ENCODE measurements at regions of chr4 and their contacts with region 1.

Region 1: DNA sequence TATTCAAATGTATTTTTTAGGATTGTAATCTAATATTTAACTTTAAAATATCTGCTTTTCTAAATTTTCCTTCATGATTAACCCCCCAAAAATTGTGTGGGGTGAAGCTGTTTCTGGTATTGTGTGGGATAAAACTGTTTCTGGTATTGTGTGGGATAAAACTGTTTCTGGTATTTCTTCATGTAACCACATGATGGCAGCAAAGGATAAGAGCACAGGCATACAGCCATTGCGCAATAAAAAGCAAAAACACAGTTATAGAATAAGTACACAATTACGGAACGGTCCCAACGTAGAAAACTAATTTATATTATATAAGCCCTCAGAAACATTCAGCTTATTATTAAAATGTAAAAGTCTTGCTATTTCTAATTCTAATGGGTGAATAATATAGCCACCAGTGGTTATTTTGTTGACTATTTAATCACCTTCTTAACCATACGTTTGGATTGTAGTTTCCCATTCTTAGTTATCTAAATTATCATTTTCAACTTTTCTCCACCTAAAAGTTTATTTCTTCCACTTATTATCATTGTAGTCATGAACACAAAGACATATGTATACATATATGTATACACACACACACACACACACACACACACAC is 333.9 kb upstream of the FSTL5 start:
- DNase-seq: peak; percentile 15
- ATAC-seq: peak; percentile 63
- H3K4me3 ChIP-seq: no peak overlapping the region
- H3K27ac ChIP-seq: no peak overlapping the region
- H3K4me1 ChIP-seq: no peaks in the 10 kb centered on the region
- H3K27me3 ChIP-seq: no peaks in the 10 kb centered on the region
- CTCF ChIP-seq: peak; percentile 66 to 82 (median 78)
- POLR2A ChIP-seq: no peak
- RAD21 ChIP-seq: peak; percentile 92

Region 2: GRCh38 chr4:162959046-162959445 is 461.4 kb after region 1 on chr4:
- CTCF ChIA-PET with region 1: interaction called, 4 read pairs
- POLR2A ChIA-PET with region 1: no interaction called
- RAD21 ChIA-PET with region 1: no interaction called
- intact Hi-C with region 1: loop called (anchors 1 kb)
- DNase-seq: peak; percentile 10
- ATAC-seq: peak; percentile 83
- H3K4me3 ChIP-seq: no peak overlapping the region
- H3K27ac ChIP-seq: no peak overlapping the region
- H3K4me1 ChIP-seq: no peaks in the 10 kb centered on the region
- H3K27me3 ChIP-seq: no peaks in the 10 kb centered on the region
- CTCF ChIP-seq: peak; percentile 20 to 49 (median 36); a peak in 5 of 6 replicates
- POLR2A ChIP-seq: no peak
- RAD21 ChIP-seq: peak; percentile 51

Region 3: GRCh38 chr4:163042306-163042705 is 544.6 kb after region 1 on chr4:
- CTCF ChIA-PET with region 1: interaction called, 21 read pairs
- POLR2A ChIA-PET with region 1: no interaction called
- RAD21 ChIA-PET with region 1: interaction called in 1 of 2 experiments, 4 read pairs
- intact Hi-C with region 1: loop called (anchors 1 kb)
- DNase-seq: no peak
- ATAC-seq: no peak
- H3K4me3 ChIP-seq: no peak overlapping the region
- H3K27ac ChIP-seq: no peak overlapping the region
- H3K4me1 ChIP-seq: no peaks in the 10 kb centered on the region
- H3K27me3 ChIP-seq: no peaks in the 10 kb centered on the region
- CTCF ChIP-seq: no peak
- POLR2A ChIP-seq: no peak
- RAD21 ChIP-seq: no peak

Region 4: DNA sequence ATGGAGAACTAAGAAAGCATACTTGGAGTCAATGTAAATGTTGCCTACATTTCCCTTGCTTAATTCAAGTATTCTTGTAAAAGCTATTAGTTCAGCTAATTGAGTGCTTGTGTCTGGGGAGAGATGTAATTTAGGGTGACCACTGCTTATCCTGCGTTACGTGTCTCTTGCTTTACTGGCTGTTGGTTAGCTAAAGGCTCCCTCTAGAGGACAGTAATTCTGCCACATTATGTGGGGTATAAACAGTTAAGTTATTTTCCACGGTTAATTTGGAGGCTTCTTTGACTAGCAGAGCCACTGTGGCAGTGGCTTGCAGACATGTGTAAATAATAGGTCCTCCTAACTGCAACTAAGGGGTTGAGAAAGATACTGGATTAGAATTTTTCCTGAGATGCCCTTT is 694.3 kb after region 1 on chr4:
- CTCF ChIA-PET with region 1: no interaction called
- POLR2A ChIA-PET with region 1: no interaction called
- RAD21 ChIA-PET with region 1: interaction called in 1 of 2 experiments, 3 read pairs
- intact Hi-C with region 1: loop called (anchors 1 kb)
- DNase-seq: peak; percentile 31
- ATAC-seq: peak; percentile 93
- H3K4me3 ChIP-seq: no peak overlapping the region
- H3K27ac ChIP-seq: no peak overlapping the region
- H3K4me1 ChIP-seq: no peaks in the 10 kb centered on the region
- H3K27me3 ChIP-seq: no peaks in the 10 kb centered on the region
- CTCF ChIP-seq: peak; percentile 60 to 82 (median 63); a peak in 5 of 6 replicates
- POLR2A ChIP-seq: no peak
- RAD21 ChIP-seq: peak; percentile 81

Region 5: DNA sequence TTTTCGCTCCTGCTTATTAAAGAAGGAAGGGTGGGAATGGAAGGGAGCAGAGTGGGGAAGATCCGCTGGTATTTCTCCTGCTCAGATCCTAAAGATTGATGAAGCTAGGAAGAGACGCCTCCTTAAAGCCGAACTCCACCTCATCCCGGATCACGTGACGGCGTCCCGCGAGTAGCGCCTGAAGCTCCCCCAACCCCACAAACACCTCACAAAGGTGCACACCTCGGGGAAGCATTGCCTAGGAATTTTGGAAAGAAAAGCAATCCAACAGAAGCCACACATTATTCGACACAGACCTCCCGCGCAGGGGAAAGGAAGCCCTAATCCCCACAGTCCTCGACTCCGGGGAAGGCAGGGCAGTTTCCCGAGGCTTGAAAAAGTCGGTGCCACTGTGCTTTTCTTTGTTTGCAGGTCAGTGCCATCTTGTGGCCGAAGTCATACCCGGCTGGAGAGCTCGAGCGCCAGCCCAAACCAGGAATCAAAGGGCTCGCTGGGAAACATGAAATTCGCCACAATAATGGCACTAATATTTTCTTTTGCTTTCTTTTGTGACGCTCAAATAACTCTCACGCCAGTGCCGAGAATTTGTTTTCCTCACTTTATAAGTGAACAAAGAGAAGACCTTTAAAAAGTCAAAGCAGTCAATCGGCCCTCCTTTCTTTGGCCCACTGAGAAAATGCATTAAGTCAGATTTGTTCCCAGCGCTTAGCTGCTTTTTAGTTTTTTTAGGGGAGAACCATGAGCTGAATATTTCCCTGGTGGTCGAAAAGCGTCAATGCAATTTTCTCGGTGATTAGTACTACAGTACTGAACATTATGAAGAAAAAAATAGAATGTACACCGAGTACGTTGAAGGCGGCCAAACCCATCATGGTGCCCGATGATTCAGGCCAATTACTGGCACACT is 835.1 kb after region 1 on chr4 and contains the start of gene NPY1R:
- CTCF ChIA-PET with region 1: no interaction called
- POLR2A ChIA-PET with region 1: no interaction called
- RAD21 ChIA-PET with region 1: no interaction called
- intact Hi-C with region 1: loop called (anchors 5 kb)
- DNase-seq: peak; percentile 34
- ATAC-seq: peak; percentile 90
- H3K4me3 ChIP-seq: peak within 1 kb of the TSS; percentile 17 to 37; a peak in 3 of 4 replicates
- H3K27ac ChIP-seq: no peak within 1 kb of the TSS
- H3K4me1 ChIP-seq: no peaks in the 10 kb centered on the region; a peak in 1 of 4 replicates
- H3K27me3 ChIP-seq: no peaks in the 10 kb centered on the region
- CTCF ChIP-seq: peak; percentile 34 to 62 (median 61); a peak in 5 of 6 replicates
- POLR2A ChIP-seq: no peak
- RAD21 ChIP-seq: peak; percentile 62
- total RNA-seq, gene NPY1R: 0.39 TPM

Region 6: DNA sequence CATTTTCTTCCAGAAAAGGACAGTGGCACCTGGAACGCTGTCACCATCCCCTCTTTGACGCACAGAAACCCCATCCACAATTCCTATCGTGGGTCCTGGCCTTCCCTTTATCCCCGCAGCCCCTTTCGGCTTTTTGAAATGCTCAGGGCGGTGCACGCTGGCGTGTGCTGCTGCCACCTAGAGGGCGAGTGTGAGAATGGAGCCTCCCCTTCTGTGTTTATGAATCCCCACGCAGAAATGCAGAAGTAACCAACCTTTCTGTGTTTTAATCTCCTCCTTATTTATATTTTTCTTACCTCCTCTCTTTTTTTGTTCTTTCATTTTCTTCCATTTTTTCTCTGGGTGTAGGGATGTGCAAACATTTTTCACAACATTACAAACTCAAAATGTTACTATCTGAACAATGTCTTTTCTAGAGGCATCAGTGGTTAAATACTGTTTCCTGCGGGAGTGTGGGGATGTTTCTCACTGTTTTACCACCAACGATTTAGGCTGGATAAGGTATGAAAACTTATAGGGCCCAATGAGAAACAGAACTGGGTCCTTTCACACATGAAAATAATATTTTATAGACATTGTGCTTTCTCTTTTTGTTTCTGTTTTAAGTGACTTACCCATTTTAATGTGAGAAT is 1046.9 kb after region 1 on chr4:
- CTCF ChIA-PET with region 1: interaction called, 5 read pairs
- POLR2A ChIA-PET with region 1: no interaction called
- RAD21 ChIA-PET with region 1: no interaction called
- intact Hi-C with region 1: loop called (anchors 2 kb)
- DNase-seq: no peak
- ATAC-seq: peak; percentile 85
- H3K4me3 ChIP-seq: no peak overlapping the region
- H3K27ac ChIP-seq: no peak overlapping the region
- H3K4me1 ChIP-seq: peaks cover 0 to 7% of the 10 kb centered on the region in 2 experiments; a peak in 1 of 4 replicates
- H3K27me3 ChIP-seq: no peaks in the 10 kb centered on the region
- CTCF ChIP-seq: peak; percentile 59 to 94 (median 94); a peak in 5 of 6 replicates
- POLR2A ChIP-seq: no peak
- RAD21 ChIP-seq: peak; percentile 64

Region 7: GRCh38 chr4:164012396-164013027 is 1514.8 kb after region 1 on chr4:
- CTCF ChIA-PET with region 1: no interaction called
- POLR2A ChIA-PET with region 1: no interaction called
- RAD21 ChIA-PET with region 1: no interaction called
- intact Hi-C with region 1: loop called (anchors 2 kb)
- DNase-seq: peak; percentile 29
- ATAC-seq: peak; percentile 99
- H3K4me3 ChIP-seq: no peak overlapping the region
- H3K27ac ChIP-seq: no peak overlapping the region
- H3K4me1 ChIP-seq: no peaks in the 10 kb centered on the region
- H3K27me3 ChIP-seq: no peaks in the 10 kb centered on the region
- CTCF ChIP-seq: peak; percentile 69 to 82 (median 72)
- POLR2A ChIP-seq: no peak
- RAD21 ChIP-seq: peak; percentile 89

Measured in HCT116 (cell line).